ENCODE measurements at regions of chr18 and their contacts with region 1.

Region 1: GRCh38 chr18:13159579-13159978 is 59.0 kb upstream of the LDLRAD4 start:
- DNase-seq: peak in 1 of 2 donors; percentile 80
- ATAC-seq: peak; percentile 75 to 81 (median 76)
- H3K4me3 ChIP-seq: no peak overlapping the region
- H3K4me3 Mint-ChIP-seq: no peak overlapping the region
- H3K27ac ChIP-seq: no peak overlapping the region
- H3K27ac Mint-ChIP-seq: no peak overlapping the region
- H3K4me1 ChIP-seq: no peaks in the 10 kb centered on the region
- H3K4me1 Mint-ChIP-seq: peaks cover 6 to 7% of the 10 kb centered on the region in 2 donors
- H3K27me3 ChIP-seq: no peaks in the 10 kb centered on the region
- H3K27me3 Mint-ChIP-seq: peaks cover 12 to 18% of the 10 kb centered on the region in 2 donors
- CTCF ChIP-seq: peak; percentile 80

Region 2: GRCh38 chr18:12726774-12727550 is 432.6 kb before region 1 on chr18:
- intact Hi-C with region 1: loop called (anchors 1 kb)
- DNase-seq: peak; percentile 33 to 84
- ATAC-seq: peak; percentile 69 to 82 (median 78)
- H3K4me3 ChIP-seq: no peak overlapping the region
- H3K4me3 Mint-ChIP-seq: no peak overlapping the region
- H3K27ac ChIP-seq: no peak overlapping the region
- H3K27ac Mint-ChIP-seq: peak overlapping the region in 1 of 2 donors; percentile 7
- H3K4me1 ChIP-seq: no peaks in the 10 kb centered on the region
- H3K4me1 Mint-ChIP-seq: peaks cover 4 to 5% of the 10 kb centered on the region in 2 donors
- H3K27me3 ChIP-seq: no peaks in the 10 kb centered on the region
- H3K27me3 Mint-ChIP-seq: no peaks in the 10 kb centered on the region
- CTCF ChIP-seq: peak; percentile 91